MCF 10A (cell line): ENCODE measurements at regions of chr12 and their contacts with region 1.

Region 1: GRCh38 chr12:121550974-121551634 is 29.7 kb downstream of the KDM2B start:
- DNase-seq: no peak
- H3K4me3 Mint-ChIP-seq: no peak overlapping the region
- H3K27ac Mint-ChIP-seq: no peak overlapping the region
- H3K4me1 Mint-ChIP-seq: no peaks in the 10 kb centered on the region
- H3K27me3 Mint-ChIP-seq: no peaks in the 10 kb centered on the region
- CTCF ChIP-seq: no peak

Region 2: DNA sequence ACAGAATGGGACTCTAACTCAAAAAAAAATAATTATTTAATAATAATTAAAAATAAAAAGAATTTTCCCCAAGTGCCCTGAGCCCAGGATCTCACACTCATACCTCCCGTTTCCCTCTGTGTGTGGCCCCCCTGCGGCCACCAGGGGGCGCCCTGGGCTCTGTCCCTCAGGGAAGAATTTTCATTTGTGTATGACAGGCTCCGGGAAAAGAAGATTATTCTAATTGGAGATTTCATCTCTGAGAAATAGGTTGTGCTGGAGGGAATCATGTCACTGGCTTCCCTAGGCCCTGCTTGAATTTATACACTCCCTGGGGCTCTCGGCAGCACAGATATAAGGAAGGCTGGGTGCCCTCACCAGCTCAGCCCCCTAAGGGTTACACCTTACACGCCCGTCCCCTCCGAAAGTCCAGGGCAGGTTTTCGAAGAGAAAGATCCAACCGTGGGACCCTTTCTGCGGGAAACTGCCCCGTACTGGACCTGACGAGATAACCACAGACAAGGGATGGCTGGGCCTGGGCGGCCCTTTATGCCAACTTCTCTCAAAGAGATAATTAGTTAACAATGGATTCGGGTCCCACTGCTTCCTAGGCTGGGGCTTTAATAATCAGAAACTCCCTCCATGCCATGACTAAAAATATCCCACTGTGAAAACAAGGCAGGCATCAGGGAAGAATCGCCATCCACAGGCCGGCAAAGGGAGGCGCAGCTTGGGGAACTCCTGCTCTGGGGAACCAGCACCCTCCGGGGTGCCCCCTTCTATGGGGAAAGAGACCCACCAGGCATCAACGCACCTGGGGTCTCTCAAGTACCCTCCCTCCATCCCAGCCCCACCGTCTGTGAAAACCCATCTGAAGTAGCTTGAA is 50.9 kb before region 1 on chr12:
- CTCF ChIA-PET with region 1: no interaction called
- POLR2A ChIA-PET with region 1: no interaction called
- intact Hi-C with region 1: loop called (anchors 1 kb)
- DNase-seq: peak; percentile 69
- H3K4me3 Mint-ChIP-seq: no peak overlapping the region
- H3K27ac Mint-ChIP-seq: no peak overlapping the region
- H3K4me1 Mint-ChIP-seq: no peaks in the 10 kb centered on the region
- H3K27me3 Mint-ChIP-seq: no peaks in the 10 kb centered on the region
- CTCF ChIP-seq: peak; percentile 87

Region 3: DNA sequence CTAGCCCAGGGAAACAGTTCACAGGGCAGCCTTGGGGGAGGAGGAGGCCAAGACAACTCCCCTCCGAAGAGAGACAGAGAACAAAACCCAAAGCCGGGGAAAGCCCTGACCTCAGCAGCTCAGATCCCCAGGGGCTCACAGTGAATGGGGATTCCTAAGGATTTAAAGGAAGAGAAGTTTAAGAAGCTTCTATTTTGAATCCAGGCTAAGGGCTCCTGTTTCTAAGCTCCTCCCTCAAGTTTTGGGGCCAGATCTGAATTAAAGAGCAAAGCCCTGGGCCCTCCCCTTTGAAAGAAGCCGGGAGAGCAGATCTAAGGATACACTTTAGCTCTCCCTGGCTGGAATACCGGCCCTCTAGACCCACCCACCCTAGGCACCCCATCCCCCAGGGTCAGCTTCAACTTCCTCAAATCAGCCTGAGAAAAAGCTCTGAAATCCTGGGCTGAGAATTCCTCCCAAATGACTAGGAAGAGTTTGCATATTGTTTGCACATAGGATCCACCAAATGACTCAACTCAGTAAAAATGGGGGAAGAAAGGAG is 25.8 kb after region 1 on chr12:
- CTCF ChIA-PET with region 1: interaction called, 11 read pairs
- POLR2A ChIA-PET with region 1: interaction called, 3 read pairs
- intact Hi-C with region 1: no loop called
- DNase-seq: no peak
- H3K4me3 Mint-ChIP-seq: peak overlapping the region; percentile 31
- H3K27ac Mint-ChIP-seq: no peak overlapping the region
- H3K4me1 Mint-ChIP-seq: no peaks in the 10 kb centered on the region
- H3K27me3 Mint-ChIP-seq: no peaks in the 10 kb centered on the region
- CTCF ChIP-seq: no peak

Region 4: GRCh38 chr12:121626087-121626852 is 75.2 kb after region 1 on chr12 and contains the start of gene ORAI1:
- CTCF ChIA-PET with region 1: interaction called, 33 read pairs
- POLR2A ChIA-PET with region 1: interaction called, 6 read pairs
- intact Hi-C with region 1: loop called (anchors 1 kb)
- DNase-seq: peak; percentile 93
- H3K4me3 Mint-ChIP-seq: peak within 1 kb of the TSS; percentile 76
- H3K27ac Mint-ChIP-seq: no peak within 1 kb of the TSS
- H3K4me1 Mint-ChIP-seq: peaks cover 4% of the 10 kb centered on the region
- H3K27me3 Mint-ChIP-seq: no peaks in the 10 kb centered on the region
- CTCF ChIP-seq: no peak
- total RNA-seq, gene ORAI1: 12.1 and 16.3 TPM in 2 replicates

Region 5: DNA sequence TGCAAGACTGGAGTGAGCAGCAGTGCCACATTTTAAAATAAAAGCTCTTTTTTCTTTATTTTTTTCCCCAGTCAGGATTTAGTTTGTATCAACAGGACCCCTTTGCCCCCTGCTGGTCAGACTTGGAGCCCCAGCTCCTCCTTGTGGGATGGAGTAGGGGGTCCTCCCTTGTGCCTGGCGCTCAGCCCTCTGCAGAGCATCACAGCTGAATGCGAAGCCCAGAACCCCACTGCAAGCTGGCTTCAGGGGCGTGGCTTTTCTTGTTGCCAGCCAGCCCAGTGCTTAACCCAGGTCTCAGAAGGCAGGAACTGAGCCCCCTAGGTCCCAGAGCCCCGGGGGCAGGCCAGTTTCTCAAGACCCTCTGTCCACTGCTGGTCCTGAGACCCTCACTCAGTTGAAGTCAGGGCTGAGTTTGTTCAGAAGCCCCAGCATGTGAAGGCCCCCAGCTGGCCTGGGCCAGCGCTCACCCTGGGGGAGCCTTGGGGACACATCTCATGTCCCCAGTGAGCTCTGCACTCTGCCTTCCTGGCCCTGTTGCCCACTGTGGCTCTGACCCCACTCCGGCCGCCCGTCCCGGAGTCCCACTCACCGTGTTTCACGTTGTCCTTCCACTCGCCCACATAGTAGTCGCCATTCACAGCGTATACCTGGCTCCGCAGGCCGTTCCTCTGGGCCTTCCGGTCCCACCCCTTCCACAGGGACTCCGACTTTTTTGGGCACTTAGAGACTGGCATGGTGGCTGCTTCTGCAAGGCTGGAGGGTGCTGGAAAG is 117.8 kb after region 1 on chr12:
- CTCF ChIA-PET with region 1: interaction called, 14 read pairs
- POLR2A ChIA-PET with region 1: no interaction called
- intact Hi-C with region 1: no loop called
- DNase-seq: peak; percentile 36
- H3K4me3 Mint-ChIP-seq: no peak overlapping the region
- H3K27ac Mint-ChIP-seq: no peak overlapping the region
- H3K4me1 Mint-ChIP-seq: peaks cover 10% of the 10 kb centered on the region
- H3K27me3 Mint-ChIP-seq: no peaks in the 10 kb centered on the region
- CTCF ChIP-seq: peak; percentile 39

Region 6: GRCh38 chr12:121678716-121679580 is 127.8 kb after region 1 on chr12:
- CTCF ChIA-PET with region 1: interaction called, 56 read pairs
- POLR2A ChIA-PET with region 1: interaction called, 3 read pairs
- intact Hi-C with region 1: loop called (anchors 1 kb)
- DNase-seq: no peak
- H3K4me3 Mint-ChIP-seq: no peak overlapping the region
- H3K27ac Mint-ChIP-seq: no peak overlapping the region
- H3K4me1 Mint-ChIP-seq: no peaks in the 10 kb centered on the region
- H3K27me3 Mint-ChIP-seq: no peaks in the 10 kb centered on the region
- CTCF ChIP-seq: no peak

Region 7: DNA sequence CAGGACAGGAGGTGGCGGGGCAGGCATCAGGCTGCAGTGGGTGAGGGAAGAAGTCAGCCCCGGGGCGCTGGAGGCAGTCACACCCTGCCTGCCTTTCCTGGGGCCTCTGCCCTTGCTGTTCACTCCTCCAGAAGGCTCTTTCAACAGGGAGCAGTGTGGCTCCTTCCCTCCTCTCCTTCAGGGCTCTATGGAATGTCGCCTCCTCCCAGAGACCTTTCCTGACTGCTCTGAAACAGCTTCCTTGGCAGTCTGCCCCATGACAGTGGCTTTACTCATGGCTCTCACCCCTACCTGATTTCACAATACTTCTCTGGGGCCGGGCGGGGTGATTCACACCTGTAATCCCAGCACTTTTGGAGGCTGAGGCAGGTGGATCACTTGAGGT is 235.3 kb after region 1 on chr12:
- CTCF ChIA-PET with region 1: no interaction called
- POLR2A ChIA-PET with region 1: no interaction called
- intact Hi-C with region 1: no loop called
- DNase-seq: peak; percentile 100
- H3K4me3 Mint-ChIP-seq: no peak overlapping the region
- H3K27ac Mint-ChIP-seq: peak overlapping the region; percentile 76
- H3K4me1 Mint-ChIP-seq: peaks cover 35% of the 10 kb centered on the region
- H3K27me3 Mint-ChIP-seq: no peaks in the 10 kb centered on the region
- CTCF ChIP-seq: no peak